HepG2 (cell line): ENCODE measurements at regions of chr12 and their contacts with region 1.

Region 1: DNA sequence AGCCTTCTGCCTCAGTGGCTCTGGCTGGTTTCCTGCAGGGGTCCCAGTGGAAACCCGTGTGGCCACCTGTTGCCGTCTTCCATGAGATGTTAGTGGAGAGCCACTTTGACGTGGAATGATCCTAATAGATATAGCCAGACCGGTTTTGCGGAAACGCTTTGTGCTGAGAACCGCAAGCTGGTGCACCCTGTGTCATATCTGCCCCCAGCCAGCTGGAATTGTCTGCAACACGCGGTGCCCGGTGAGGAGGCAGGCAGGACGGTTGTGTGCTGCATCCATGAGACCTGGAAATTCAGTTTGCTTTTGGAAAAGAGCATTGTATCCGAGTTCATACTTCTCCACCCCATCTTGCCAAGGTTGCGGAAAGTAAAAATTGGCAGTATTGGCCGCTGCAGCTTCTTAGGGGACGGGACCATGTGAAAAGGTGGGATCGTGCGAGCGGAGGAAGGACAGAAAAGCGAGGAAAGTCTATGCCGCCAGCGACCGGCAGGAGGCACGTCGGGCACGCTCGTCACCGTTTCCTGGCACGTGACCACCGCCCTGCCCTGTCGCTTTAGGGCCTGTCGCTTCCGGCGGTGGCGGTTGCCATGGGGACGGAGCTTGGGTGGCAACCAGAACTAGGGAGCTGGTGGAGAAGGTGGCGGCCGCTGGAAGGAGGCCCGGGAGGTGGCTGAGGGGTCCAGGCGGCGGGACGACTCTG is at the start of gene CFAP251:
- DNase-seq: no peak
- ATAC-seq: no peak
- H3K4me3 ChIP-seq: no peak within 1 kb of the TSS
- H3K27ac ChIP-seq: no peak within 1 kb of the TSS
- H3K4me1 ChIP-seq: no peaks in the 10 kb centered on the region
- H3K27me3 ChIP-seq: no peaks in the 10 kb centered on the region
- CTCF ChIP-seq: no peak
- EP300 ChIP-seq: no peak
- POLR2A ChIP-seq: no peak
- RAD21 ChIP-seq: no peak
- total RNA-seq, gene CFAP251: 0.07 and 0.42 TPM in 2 replicates

Region 2: GRCh38 chr12:121903202-121903601 is 14.9 kb before region 1 on chr12:
- CTCF ChIA-PET with region 1: no interaction called
- POLR2A ChIA-PET with region 1: no interaction called
- in situ Hi-C with region 1: no loop called
- intact Hi-C with region 1: no loop called
- DNase-seq: no peak
- ATAC-seq: peak; percentile 30; the same call in 2 of the 3 replicates
- H3K4me3 ChIP-seq: no peak overlapping the region
- H3K27ac ChIP-seq: no peak overlapping the region
- H3K4me1 ChIP-seq: peaks cover 1% of the 10 kb centered on the region
- H3K27me3 ChIP-seq: no peaks in the 10 kb centered on the region; a peak in 1 of 5 replicates
- CTCF ChIP-seq: no peak
- EP300 ChIP-seq: no peak
- POLR2A ChIP-seq: no peak
- RAD21 ChIP-seq: no peak

Region 3: DNA sequence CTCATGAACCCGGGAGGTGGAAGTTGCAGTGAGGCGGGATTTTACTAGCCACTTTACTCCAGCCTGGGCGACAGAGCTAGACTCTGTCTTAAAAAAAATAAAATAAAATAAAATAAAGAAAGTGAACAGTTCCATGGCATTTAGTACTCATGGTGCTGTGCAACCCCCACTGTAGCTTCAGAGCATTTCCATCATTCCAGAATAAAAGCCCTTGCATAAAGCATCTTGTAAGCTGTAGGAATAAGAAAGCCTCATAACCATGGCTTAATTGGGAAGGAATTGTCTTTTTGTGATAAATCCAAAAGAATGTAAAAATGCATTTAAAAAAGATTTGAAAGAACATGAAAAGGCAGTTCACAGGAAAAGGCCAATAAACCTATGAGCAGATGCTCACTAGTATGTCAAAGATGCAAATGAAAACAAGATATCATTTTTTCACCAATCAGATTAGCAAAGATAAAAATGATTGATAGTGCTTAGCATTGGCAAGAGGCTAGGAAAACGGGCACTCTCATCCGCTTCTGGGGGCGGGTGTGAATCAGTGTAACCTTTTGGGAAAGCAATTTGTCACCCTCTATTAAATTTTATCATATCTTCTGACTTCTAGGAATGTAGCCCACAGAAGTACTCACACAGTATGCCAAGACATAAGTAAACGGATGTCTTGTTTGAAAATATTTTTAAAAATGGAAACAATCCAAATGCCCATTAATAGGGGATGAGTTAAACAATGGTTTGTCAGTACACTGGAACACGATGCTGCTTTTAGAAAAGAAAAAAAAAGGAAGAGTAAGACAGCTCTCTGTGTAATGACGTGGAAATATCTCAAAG is 46.9 kb after region 1 on chr12:
- CTCF ChIA-PET with region 1: no interaction called
- POLR2A ChIA-PET with region 1: no interaction called
- in situ Hi-C with region 1: no loop called
- intact Hi-C with region 1: no loop called
- DNase-seq: no peak
- ATAC-seq: no peak
- H3K4me3 ChIP-seq: no peak overlapping the region
- H3K27ac ChIP-seq: no peak overlapping the region
- H3K4me1 ChIP-seq: peaks cover 7% of the 10 kb centered on the region; the same call in 1 of the 2 replicates
- H3K27me3 ChIP-seq: peaks cover 0 to 1% of the 10 kb centered on the region in 2 experiments; a peak in 2 of 5 replicates
- CTCF ChIP-seq: no peak
- EP300 ChIP-seq: no peak
- POLR2A ChIP-seq: no peak
- RAD21 ChIP-seq: no peak

Region 4: DNA sequence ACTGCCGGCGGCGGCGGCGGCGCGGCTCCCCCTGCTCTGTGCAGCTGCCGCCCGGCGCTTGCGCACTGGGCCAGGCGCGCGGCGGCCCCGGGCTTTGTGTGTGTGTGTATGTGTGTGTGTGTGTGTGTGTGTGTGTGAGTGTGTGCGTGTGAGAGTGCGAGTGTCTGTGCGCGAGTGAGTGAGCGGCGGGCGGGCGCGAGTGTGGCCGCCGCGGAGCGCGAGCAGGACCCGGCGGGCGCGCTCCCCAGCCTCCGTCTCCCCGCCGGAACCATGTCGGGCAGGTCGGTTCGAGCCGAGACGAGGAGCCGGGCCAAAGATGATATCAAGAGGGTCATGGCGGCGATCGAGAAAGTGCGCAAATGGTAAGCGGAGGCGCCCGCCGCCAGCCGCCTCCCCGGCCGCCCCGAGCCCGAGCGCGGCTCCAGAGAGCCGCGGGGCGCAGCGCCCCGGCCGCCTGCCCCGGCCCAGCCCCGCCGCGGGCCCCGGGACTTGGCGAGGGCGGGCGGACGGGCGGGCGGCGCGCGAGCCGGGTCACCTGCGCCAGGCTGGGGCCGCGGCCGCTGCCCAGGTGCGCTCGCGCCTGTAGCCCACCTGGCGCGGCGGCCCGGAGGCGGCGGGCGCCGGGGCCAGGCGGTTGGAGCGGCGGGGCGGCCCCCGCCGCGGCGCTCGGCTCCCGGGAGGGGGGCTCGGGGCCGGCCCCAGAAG is 103.8 kb after region 1 on chr12 and contains the start of gene BCL7A:
- CTCF ChIA-PET with region 1: no interaction called
- POLR2A ChIA-PET with region 1: no interaction called
- in situ Hi-C with region 1: no loop called
- intact Hi-C with region 1: loop called (anchors 10 kb)
- DNase-seq: peak; percentile 15
- ATAC-seq: peak; percentile 38
- H3K4me3 ChIP-seq: peak within 1 kb of the TSS; percentile 71 to 81 (median 73)
- H3K27ac ChIP-seq: peak within 1 kb of the TSS; percentile 79
- H3K4me1 ChIP-seq: peaks cover 36% of the 10 kb centered on the region
- H3K27me3 ChIP-seq: peaks cover 0 to 20% of the 10 kb centered on the region in 2 experiments; a peak in 2 of 5 replicates
- CTCF ChIP-seq: no peak
- EP300 ChIP-seq: no peak
- POLR2A ChIP-seq: 0 out of 4 replicates have a peak, but pooled peaks of 1 of the 2 experiments have one; percentile 26
- RAD21 ChIP-seq: 0 out of 2 replicates have a peak, but pooled peaks have one; percentile 10
- total RNA-seq, gene BCL7A: 6.2 and 6.3 TPM in 2 replicates

Region 5: DNA sequence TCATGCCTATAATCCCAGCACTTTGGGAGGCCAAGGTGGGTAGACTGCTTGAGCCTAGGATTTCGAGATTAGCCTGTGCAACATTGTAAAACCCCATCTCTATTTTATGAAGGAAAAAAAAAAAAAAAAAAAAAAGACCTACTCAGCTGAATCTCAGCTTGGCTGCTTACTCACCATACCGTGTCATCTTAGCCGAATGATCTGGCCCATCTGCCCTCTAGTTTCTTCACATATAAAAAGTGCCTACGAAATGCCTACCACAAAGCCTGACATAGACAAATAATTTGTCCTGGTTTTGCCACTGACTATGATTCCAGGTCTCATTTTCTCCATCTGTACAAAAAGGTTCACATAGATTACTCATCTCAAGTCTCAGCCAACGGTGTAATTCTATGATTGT is 297.6 kb after region 1 on chr12:
- CTCF ChIA-PET with region 1: no interaction called
- POLR2A ChIA-PET with region 1: no interaction called
- in situ Hi-C with region 1: no loop called
- intact Hi-C with region 1: no loop called
- DNase-seq: no peak
- ATAC-seq: no peak
- H3K4me3 ChIP-seq: no peak overlapping the region
- H3K27ac ChIP-seq: no peak overlapping the region
- H3K4me1 ChIP-seq: no peaks in the 10 kb centered on the region
- H3K27me3 ChIP-seq: no peaks in the 10 kb centered on the region
- CTCF ChIP-seq: no peak
- EP300 ChIP-seq: no peak
- POLR2A ChIP-seq: no peak
- RAD21 ChIP-seq: no peak